Posterior vena cava (tissue), 2 donors: ENCODE measurements at regions of chr3 and their contacts with region 1.

Region 1: GRCh38 chr3:194344012-194344411 is 7.1 kb downstream of the CPN2 start:
- DNase-seq: peak; percentile 89

Region 2: GRCh38 chr3:194395778-194396547 is 52.0 kb after region 1 on chr3:
- intact Hi-C with region 1: loop called (anchors 5 kb)
- DNase-seq: peak; percentile 88